Upper lobe of right lung (tissue), 1 donor: ENCODE measurements at regions of chr7 and their contacts with region 1.

Region 1: DNA sequence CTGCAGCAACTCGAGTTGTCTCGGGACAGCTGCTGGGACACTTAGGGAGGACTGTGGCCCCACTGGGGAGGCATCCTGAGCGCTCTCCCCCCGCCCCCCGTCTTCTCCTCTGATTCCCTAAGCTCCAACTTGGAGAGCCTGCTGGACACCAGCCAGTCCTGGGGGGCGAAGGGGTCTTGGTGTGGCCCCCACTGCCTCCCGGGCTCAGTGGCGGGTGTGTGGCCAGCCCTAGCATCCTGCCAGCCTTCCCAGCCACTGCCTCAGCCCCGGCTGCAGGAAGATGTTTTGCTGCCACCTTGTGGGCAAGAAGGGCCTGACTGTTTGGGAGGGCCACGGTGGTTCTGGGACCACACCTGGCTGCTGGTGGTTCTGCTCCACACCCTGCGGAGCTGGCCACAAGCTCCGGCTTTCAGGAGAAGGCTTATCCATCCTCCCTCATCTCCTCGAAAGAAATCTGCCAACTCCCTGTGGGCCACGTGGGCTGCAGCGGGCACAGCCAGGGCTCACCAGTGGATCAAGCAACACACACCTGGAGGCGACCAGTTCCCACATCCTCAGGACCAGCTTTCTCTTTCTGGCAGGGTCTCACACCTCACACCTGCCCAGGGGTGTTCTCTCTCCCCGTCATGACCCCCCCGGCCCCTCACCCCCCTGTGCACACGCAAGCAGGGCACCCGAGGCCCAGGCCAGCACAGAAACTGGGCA is 24.8 kb downstream of the AGAP3 start:
- DNase-seq: peak; percentile 85
- ATAC-seq: peak; percentile 72
- H3K4me3 ChIP-seq: no peak overlapping the region
- H3K27ac ChIP-seq: no peak overlapping the region
- H3K4me1 ChIP-seq: peaks cover 22% of the 10 kb centered on the region
- H3K27me3 ChIP-seq: no peaks in the 10 kb centered on the region
- CTCF ChIP-seq: peak; percentile 84

Region 2: GRCh38 chr7:151038951-151039849 is 71.9 kb before region 1 on chr7:
- intact Hi-C with region 1: loop called (anchors 10 kb)
- DNase-seq: peak; percentile 86
- ATAC-seq: peak; percentile 77
- H3K4me3 ChIP-seq: no peak overlapping the region
- H3K27ac ChIP-seq: peak overlapping the region; percentile 30
- H3K4me1 ChIP-seq: peaks cover 11% of the 10 kb centered on the region
- H3K27me3 ChIP-seq: no peaks in the 10 kb centered on the region
- CTCF ChIP-seq: no peak